ENCODE measurements at regions of chr12 and their contacts with region 1.

Region 1: GRCh38 chr12:112012775-112013600 is at the starts of genes ERP29 and TMEM116:
- DNase-seq: peak; percentile 98
- H3K4me3 ChIP-seq: peak within 1 kb of the TSS; percentile 80 to 94 (median 93)
- H3K27ac ChIP-seq: peak within 1 kb of the TSS; percentile 82
- H3K4me1 ChIP-seq: peaks cover 9% of the 10 kb centered on the region
- H3K27me3 ChIP-seq: no peaks in the 10 kb centered on the region
- CTCF ChIP-seq: peak; percentile 36 to 61
- total RNA-seq, gene ERP29: 29.8 to 95.2 TPM
- total RNA-seq, gene TMEM116: 6.3 to 7.9 TPM

Region 2: GRCh38 chr12:111841750-111842555 is 171.0 kb before region 1 on chr12 and contains the start of gene MAPKAPK5:
- CTCF ChIA-PET with region 1: no interaction called
- dilution Hi-C with region 1: no loop called
- in situ Hi-C with region 1: no loop called
- intact Hi-C with region 1: loop called (anchors 2 kb)
- DNase-seq: peak; percentile 92
- H3K4me3 ChIP-seq: peak within 1 kb of the TSS; percentile 67 to 84 (median 68)
- H3K27ac ChIP-seq: peak within 1 kb of the TSS; percentile 83
- H3K4me1 ChIP-seq: peaks cover 12% of the 10 kb centered on the region
- H3K27me3 ChIP-seq: no peaks in the 10 kb centered on the region
- CTCF ChIP-seq: no peak
- total RNA-seq, gene MAPKAPK5: 34.5 to 46.7 TPM

Region 3: GRCh38 chr12:111942557-111942956 is 70.4 kb before region 1 on chr12:
- CTCF ChIA-PET with region 1: no interaction called
- dilution Hi-C with region 1: no loop called
- in situ Hi-C with region 1: loop called in 1 of 2 experiments (anchors 10 kb)
- intact Hi-C with region 1: loop called (anchors 1 kb)
- DNase-seq: peak; percentile 74
- H3K4me3 ChIP-seq: no peak overlapping the region
- H3K27ac ChIP-seq: no peak overlapping the region
- H3K4me1 ChIP-seq: peaks cover 2% of the 10 kb centered on the region
- H3K27me3 ChIP-seq: no peaks in the 10 kb centered on the region
- CTCF ChIP-seq: no peak

Region 4: GRCh38 chr12:111975161-111975931 is 37.6 kb before region 1 on chr12:
- CTCF ChIA-PET with region 1: no interaction called
- dilution Hi-C with region 1: no loop called
- in situ Hi-C with region 1: no loop called
- intact Hi-C with region 1: no loop called
- DNase-seq: peak; percentile 27
- H3K4me3 ChIP-seq: no peak overlapping the region
- H3K27ac ChIP-seq: no peak overlapping the region
- H3K4me1 ChIP-seq: no peaks in the 10 kb centered on the region
- H3K27me3 ChIP-seq: no peaks in the 10 kb centered on the region
- CTCF ChIP-seq: no peak

Region 5: DNA sequence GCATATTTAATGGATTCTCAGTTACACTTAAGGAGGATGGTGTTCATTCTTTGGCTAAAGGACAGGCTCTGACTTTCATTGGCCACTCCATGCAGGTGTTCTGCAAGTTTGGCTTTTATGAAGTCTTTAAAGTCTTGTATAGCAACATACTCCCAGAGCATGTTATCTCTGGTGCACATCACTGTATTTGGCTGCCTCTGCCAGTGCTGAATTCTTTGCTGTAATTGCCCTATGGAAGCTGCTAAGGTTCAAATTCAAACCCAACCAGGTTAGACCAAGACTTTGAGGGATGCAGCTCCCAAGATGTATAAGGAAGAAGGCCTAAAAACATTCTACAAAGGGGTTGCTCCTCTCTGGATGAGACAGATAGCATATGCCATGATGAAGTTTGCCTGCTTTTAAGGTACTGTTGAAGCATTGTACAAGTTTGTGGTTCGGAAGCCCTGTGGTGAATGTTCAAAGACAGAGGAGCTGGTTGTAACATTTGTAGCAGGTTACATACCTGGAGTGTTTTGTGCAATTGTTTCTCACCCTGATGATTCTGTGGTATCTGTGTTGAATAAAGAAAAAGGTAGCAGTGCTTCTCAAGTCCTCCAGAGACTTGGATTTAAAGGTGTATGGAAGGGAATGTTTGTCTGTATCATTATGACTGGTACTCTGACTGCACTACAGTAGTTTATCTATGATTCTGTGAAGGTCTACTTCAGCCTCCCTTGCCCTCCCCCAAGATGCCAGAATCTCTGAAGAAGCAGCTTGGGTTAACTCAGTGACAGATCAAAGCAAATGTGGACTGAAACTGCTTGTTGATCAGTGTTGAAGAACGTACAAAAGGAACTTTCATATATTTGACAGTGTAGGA is 19.5 kb before region 1 on chr12:
- CTCF ChIA-PET with region 1: no interaction called
- dilution Hi-C with region 1: no loop called
- in situ Hi-C with region 1: no loop called
- intact Hi-C with region 1: loop called (anchors 2 kb)
- DNase-seq: no peak
- H3K4me3 ChIP-seq: no peak overlapping the region
- H3K27ac ChIP-seq: no peak overlapping the region
- H3K4me1 ChIP-seq: no peaks in the 10 kb centered on the region
- H3K27me3 ChIP-seq: no peaks in the 10 kb centered on the region
- CTCF ChIP-seq: no peak

Region 6: GRCh38 chr12:112096667-112097066 is 83.7 kb after region 1 on chr12:
- CTCF ChIA-PET with region 1: no interaction called
- dilution Hi-C with region 1: loop called (anchors 5 kb)
- in situ Hi-C with region 1: no loop called
- intact Hi-C with region 1: no loop called
- DNase-seq: peak; percentile 86
- H3K4me3 ChIP-seq: no peak overlapping the region
- H3K27ac ChIP-seq: no peak overlapping the region
- H3K4me1 ChIP-seq: peaks cover 14% of the 10 kb centered on the region
- H3K27me3 ChIP-seq: no peaks in the 10 kb centered on the region
- CTCF ChIP-seq: no peak